ENCODE measurements at regions of chr12 and their contacts with region 1.

Region 1: GRCh38 chr12:7806863-7807487 is 17.8 kb downstream of the NANOG start:
- DNase-seq: no peak
- ATAC-seq: no peak
- H3K4me3 ChIP-seq: no peak overlapping the region
- H3K27ac ChIP-seq: no peak overlapping the region
- H3K4me1 ChIP-seq: no peaks in the 10 kb centered on the region
- H3K27me3 ChIP-seq: no peaks in the 10 kb centered on the region
- CTCF ChIP-seq: peak in 3 of 5 experiments; percentile 22 to 64 (median 49)
- POLR2A ChIP-seq: no peak

Region 2: DNA sequence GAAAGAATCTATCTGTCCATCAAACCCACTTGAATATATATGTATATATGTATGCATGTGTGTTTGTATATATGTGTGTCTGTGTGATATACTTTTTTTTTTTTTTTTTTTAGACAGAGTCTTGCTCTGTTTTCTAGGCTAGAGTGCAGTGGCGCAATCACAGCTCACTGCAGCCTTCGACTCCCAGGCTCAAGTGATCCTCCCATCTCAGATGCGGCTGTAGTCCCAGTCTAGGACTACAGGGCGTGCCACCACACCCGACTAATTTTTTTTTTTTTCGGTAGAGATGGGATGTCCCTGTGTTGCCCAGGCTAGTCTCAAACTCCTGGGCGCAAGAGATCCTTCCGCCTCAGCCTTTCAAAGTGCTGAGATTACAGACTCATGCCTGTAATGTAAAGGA is 128.2 kb before region 1 on chr12:
- in situ Hi-C with region 1: loop called in 2 of 4 experiments (anchors 10 kb)
- intact Hi-C with region 1: no loop called
- DNase-seq: no peak
- ATAC-seq: no peak
- H3K4me3 ChIP-seq: no peak overlapping the region
- H3K27ac ChIP-seq: no peak overlapping the region
- H3K4me1 ChIP-seq: no peaks in the 10 kb centered on the region
- H3K27me3 ChIP-seq: no peaks in the 10 kb centered on the region
- CTCF ChIP-seq: no peak
- POLR2A ChIP-seq: no peak

Region 3: DNA sequence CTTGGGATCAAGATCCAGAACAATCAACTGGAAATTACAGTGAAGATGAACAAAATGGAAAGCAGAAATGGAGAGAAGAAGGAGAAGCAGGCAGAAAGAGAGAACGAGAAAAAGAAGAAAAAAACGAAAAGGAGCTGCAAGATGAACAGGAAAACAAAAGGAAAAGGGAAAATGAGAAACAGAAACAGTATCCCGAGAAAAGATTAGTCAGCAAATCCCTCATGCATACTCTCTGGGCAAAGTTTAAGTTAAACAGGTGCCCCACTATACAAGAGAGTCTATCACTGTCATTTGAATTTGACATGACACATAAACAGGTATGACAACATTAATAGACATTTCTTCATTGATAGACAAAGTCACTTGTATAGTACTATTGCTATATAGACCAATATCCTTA is 37.0 kb before region 1 on chr12:
- in situ Hi-C with region 1: no loop called
- intact Hi-C with region 1: no loop called
- DNase-seq: no peak
- ATAC-seq: no peak
- H3K4me3 ChIP-seq: no peak overlapping the region
- H3K27ac ChIP-seq: no peak overlapping the region
- H3K4me1 ChIP-seq: no peaks in the 10 kb centered on the region
- H3K27me3 ChIP-seq: no peaks in the 10 kb centered on the region
- CTCF ChIP-seq: no peak
- POLR2A ChIP-seq: no peak